ENCODE measurements at regions of chr9 and their contacts with region 1.

Region 1: GRCh38 chr9:112793213-112793810 is 42.8 kb downstream of the SNX30 start:
- DNase-seq: peak; percentile 68 to 87 (median 79)
- ATAC-seq: peak; percentile 93
- H3K4me3 ChIP-seq: no peak overlapping the region
- H3K4me3 Mint-ChIP-seq: no peak overlapping the region
- H3K27ac ChIP-seq: no peak overlapping the region
- H3K27ac Mint-ChIP-seq: no peak overlapping the region
- H3K4me1 ChIP-seq: peaks cover 5% of the 10 kb centered on the region
- H3K4me1 Mint-ChIP-seq: peaks cover 17% of the 10 kb centered on the region
- H3K27me3 ChIP-seq: no peaks in the 10 kb centered on the region
- H3K27me3 Mint-ChIP-seq: no peaks in the 10 kb centered on the region
- CTCF ChIP-seq: peak; percentile 75

Region 2: GRCh38 chr9:111759762-111760639 is 1033.3 kb before region 1 on chr9:
- CTCF ChIA-PET with region 1: no interaction called
- POLR2A ChIA-PET with region 1: no interaction called
- intact Hi-C with region 1: loop called in 1 of 2 experiments (anchors 5 kb)
- DNase-seq: peak in 12 of 14 experiments; percentile 6 to 81 (median 32)
- ATAC-seq: peak; percentile 85
- H3K4me3 ChIP-seq: no peak overlapping the region
- H3K4me3 Mint-ChIP-seq: no peak overlapping the region
- H3K27ac ChIP-seq: no peak overlapping the region
- H3K27ac Mint-ChIP-seq: no peak overlapping the region
- H3K4me1 ChIP-seq: no peaks in the 10 kb centered on the region
- H3K4me1 Mint-ChIP-seq: peaks cover 5% of the 10 kb centered on the region
- H3K27me3 ChIP-seq: no peaks in the 10 kb centered on the region
- H3K27me3 Mint-ChIP-seq: no peaks in the 10 kb centered on the region
- CTCF ChIP-seq: peak; percentile 88

Region 3: DNA sequence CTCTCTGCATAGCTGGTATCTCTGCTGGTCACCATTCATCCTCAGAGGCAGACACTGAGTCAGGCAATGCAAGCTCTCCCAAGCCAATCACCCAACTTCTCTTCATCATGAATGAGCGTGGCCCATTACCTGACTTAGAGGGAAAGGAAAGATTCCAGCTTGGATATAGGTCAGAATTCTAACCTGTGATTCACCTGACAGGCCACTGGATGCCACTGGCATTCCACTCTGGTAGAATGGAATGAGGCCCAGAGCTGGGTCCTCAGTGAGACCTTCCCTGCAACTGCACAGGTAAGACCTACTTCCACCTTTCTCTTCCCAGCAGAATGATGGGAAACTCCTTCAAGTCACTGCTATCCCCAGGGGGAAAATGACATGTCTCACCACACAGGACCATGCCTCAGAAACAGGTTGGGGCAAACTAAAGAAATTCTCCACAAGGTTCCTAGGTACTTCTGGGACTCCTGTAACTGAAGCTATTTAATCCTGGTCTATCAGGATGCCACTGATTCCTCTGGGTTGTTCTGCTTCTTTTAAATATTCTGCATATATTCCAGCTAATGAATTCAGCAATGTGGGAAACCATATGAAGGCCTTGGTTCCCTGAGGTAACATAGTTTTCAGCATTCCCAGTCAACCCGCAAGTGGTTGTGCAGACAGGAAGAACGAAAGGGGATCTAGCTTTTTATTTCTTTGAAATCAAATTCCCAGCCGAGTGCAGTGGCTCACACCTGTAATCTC is 680.2 kb before region 1 on chr9:
- CTCF ChIA-PET with region 1: no interaction called
- POLR2A ChIA-PET with region 1: no interaction called
- intact Hi-C with region 1: loop called (anchors 5 to 10 kb)
- DNase-seq: peak in 12 of 14 experiments; percentile 2 to 55 (median 10)
- ATAC-seq: peak; percentile 60
- H3K4me3 ChIP-seq: no peak overlapping the region
- H3K4me3 Mint-ChIP-seq: no peak overlapping the region
- H3K27ac ChIP-seq: no peak overlapping the region
- H3K27ac Mint-ChIP-seq: no peak overlapping the region
- H3K4me1 ChIP-seq: no peaks in the 10 kb centered on the region
- H3K4me1 Mint-ChIP-seq: no peaks in the 10 kb centered on the region
- H3K27me3 ChIP-seq: no peaks in the 10 kb centered on the region
- H3K27me3 Mint-ChIP-seq: no peaks in the 10 kb centered on the region
- CTCF ChIP-seq: peak; percentile 65

Region 4: GRCh38 chr9:112379177-112380101 is 413.9 kb before region 1 on chr9:
- CTCF ChIA-PET with region 1: no interaction called
- POLR2A ChIA-PET with region 1: no interaction called
- intact Hi-C with region 1: loop called in 1 of 2 experiments (anchors 10 kb)
- DNase-seq: peak; percentile 94 to 100 (median 98)
- ATAC-seq: peak; percentile 96
- H3K4me3 ChIP-seq: peak overlapping the region; percentile 98
- H3K4me3 Mint-ChIP-seq: peak overlapping the region; percentile 100
- H3K27ac ChIP-seq: peak overlapping the region; percentile 89 to 94
- H3K27ac Mint-ChIP-seq: peak overlapping the region; percentile 98
- H3K4me1 ChIP-seq: peaks cover 17% of the 10 kb centered on the region
- H3K4me1 Mint-ChIP-seq: peaks cover 64% of the 10 kb centered on the region
- H3K27me3 ChIP-seq: no peaks in the 10 kb centered on the region
- H3K27me3 Mint-ChIP-seq: no peaks in the 10 kb centered on the region
- CTCF ChIP-seq: no peak

Region 5: DNA sequence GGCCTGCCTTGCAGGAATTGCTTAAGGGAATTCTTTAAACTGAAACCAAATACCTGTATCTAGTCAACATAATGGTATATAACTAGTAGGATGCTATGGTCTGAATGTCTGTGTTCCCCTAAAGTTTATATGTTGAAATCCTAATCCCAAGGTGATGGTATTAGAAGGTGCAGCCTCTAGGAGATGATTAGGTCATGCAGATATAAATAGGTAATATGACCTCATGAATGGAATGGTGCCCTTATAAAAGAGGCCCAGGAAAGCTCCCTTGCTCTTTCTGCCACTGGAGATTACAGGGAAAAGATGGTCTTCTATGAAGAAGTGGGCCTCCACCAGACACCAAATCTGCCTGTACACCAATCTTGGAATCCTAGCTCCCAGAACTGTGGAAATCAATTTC is 314.1 kb before region 1 on chr9:
- CTCF ChIA-PET with region 1: no interaction called
- POLR2A ChIA-PET with region 1: no interaction called
- intact Hi-C with region 1: no loop called
- DNase-seq: no peak
- ATAC-seq: no peak
- H3K4me3 ChIP-seq: no peak overlapping the region
- H3K4me3 Mint-ChIP-seq: no peak overlapping the region
- H3K27ac ChIP-seq: no peak overlapping the region
- H3K27ac Mint-ChIP-seq: no peak overlapping the region
- H3K4me1 ChIP-seq: no peaks in the 10 kb centered on the region
- H3K4me1 Mint-ChIP-seq: no peaks in the 10 kb centered on the region
- H3K27me3 ChIP-seq: no peaks in the 10 kb centered on the region
- H3K27me3 Mint-ChIP-seq: no peaks in the 10 kb centered on the region
- CTCF ChIP-seq: no peak

Region 6: DNA sequence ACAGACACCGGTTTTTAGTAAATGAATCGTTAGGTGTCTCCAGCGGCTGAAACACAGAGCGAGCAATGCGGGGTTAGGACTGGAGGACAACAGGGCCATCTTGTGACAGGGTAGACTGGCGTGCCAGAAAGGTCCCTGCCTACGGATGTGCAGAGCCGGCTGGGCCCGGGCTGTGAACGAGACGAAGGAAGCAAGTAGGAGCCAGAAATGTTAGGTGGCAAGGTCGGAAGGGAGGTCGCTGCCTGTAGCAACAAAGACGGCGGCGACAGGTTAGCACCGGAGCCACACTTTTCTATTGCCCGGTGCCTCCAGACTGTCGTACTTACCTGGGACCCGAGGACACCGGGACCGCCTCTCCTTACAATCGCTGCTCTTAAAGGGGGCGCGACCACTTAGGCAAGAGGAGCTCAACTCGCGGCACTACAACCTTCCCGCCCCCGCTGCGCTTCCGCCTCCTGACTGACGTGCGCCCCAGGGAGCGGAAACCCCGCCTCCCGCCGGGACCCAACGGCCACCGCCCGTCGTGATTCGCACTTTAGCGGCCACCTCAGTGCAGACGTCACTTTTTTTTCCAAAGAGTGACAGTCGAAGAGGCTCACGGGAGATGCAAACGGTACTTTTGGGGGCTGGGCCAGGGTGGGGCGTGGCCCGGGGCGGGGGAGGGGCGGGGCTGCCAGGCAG is 75.5 kb before region 1 on chr9 and contains the start of gene INIP:
- CTCF ChIA-PET with region 1: interaction called, 16 read pairs
- POLR2A ChIA-PET with region 1: interaction called, 8 read pairs
- intact Hi-C with region 1: loop called (anchors 1 to 5 kb)
- DNase-seq: peak; percentile 91 to 99 (median 95)
- ATAC-seq: peak; percentile 89
- H3K4me3 ChIP-seq: peak within 1 kb of the TSS; percentile 96
- H3K4me3 Mint-ChIP-seq: peak within 1 kb of the TSS; percentile 99
- H3K27ac ChIP-seq: peak within 1 kb of the TSS; percentile 92 to 95
- H3K27ac Mint-ChIP-seq: peak within 1 kb of the TSS; percentile 99
- H3K4me1 ChIP-seq: peaks cover 15% of the 10 kb centered on the region
- H3K4me1 Mint-ChIP-seq: peaks cover 32% of the 10 kb centered on the region
- H3K27me3 ChIP-seq: no peaks in the 10 kb centered on the region
- H3K27me3 Mint-ChIP-seq: no peaks in the 10 kb centered on the region
- CTCF ChIP-seq: peak; percentile 34
- total RNA-seq, gene INIP: 7.8 to 9.1 TPM